Activated CD8-positive, alpha-beta T cell treated with anti-CD3 and anti-CD28 coated beads for 36 hours (primary cell): ENCODE measurements at regions of chr6 and their contacts with region 1.

Region 1: GRCh38 chr6:136643850-136644596 is 93.8 kb upstream of the MAP7 start:
- DNase-seq: peak; percentile 90
- ATAC-seq: peak; percentile 41
- H3K4me3 Mint-ChIP-seq: no peak overlapping the region
- H3K27ac Mint-ChIP-seq: no peak overlapping the region
- H3K4me1 Mint-ChIP-seq: no peaks in the 10 kb centered on the region
- H3K27me3 Mint-ChIP-seq: no peaks in the 10 kb centered on the region
- CTCF ChIP-seq: peak; percentile 95

Region 2: DNA sequence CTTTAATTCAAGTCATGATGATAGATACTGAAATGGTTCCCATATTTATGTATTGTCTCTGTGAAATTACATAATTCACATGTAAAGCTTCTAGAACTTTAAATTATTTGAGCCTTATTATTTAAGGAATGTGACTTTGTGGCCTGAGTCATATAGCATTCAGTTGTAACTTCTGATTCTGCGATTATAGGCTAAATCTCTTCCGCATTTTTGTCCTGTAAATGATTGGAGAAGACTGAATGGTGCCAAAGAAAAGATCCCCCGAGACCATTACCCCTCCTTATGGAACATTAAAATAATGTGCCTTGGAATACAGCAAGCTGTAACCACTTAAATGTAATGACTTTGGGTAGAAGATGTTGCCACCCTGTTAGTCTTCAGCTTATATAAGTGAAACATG is 30.5 kb before region 1 on chr6:
- CTCF ChIA-PET with region 1: interaction called, 19 read pairs
- POLR2A ChIA-PET with region 1: no interaction called
- intact Hi-C with region 1: no loop called
- DNase-seq: no peak
- ATAC-seq: no peak
- H3K4me3 Mint-ChIP-seq: no peak overlapping the region
- H3K27ac Mint-ChIP-seq: no peak overlapping the region
- H3K4me1 Mint-ChIP-seq: peaks cover 6% of the 10 kb centered on the region
- H3K27me3 Mint-ChIP-seq: no peaks in the 10 kb centered on the region
- CTCF ChIP-seq: no peak

Region 3: GRCh38 chr6:136666041-136666440 is 22.0 kb after region 1 on chr6:
- CTCF ChIA-PET with region 1: interaction called, 16 read pairs
- POLR2A ChIA-PET with region 1: no interaction called
- intact Hi-C with region 1: no loop called
- DNase-seq: no peak
- ATAC-seq: no peak
- H3K4me3 Mint-ChIP-seq: no peak overlapping the region
- H3K27ac Mint-ChIP-seq: no peak overlapping the region
- H3K4me1 Mint-ChIP-seq: no peaks in the 10 kb centered on the region
- H3K27me3 Mint-ChIP-seq: no peaks in the 10 kb centered on the region
- CTCF ChIP-seq: no peak

Region 4: GRCh38 chr6:136745300-136745699 is 101.3 kb after region 1 on chr6:
- CTCF ChIA-PET with region 1: interaction called, 18 read pairs
- POLR2A ChIA-PET with region 1: no interaction called
- intact Hi-C with region 1: no loop called
- DNase-seq: no peak
- ATAC-seq: no peak
- H3K4me3 Mint-ChIP-seq: no peak overlapping the region
- H3K27ac Mint-ChIP-seq: no peak overlapping the region
- H3K4me1 Mint-ChIP-seq: peaks cover 20% of the 10 kb centered on the region
- H3K27me3 Mint-ChIP-seq: no peaks in the 10 kb centered on the region
- CTCF ChIP-seq: no peak

Region 5: GRCh38 chr6:136783495-136784270 is 139.7 kb after region 1 on chr6:
- CTCF ChIA-PET with region 1: interaction called, 370 read pairs
- POLR2A ChIA-PET with region 1: interaction called, 3 read pairs
- intact Hi-C with region 1: no loop called
- DNase-seq: no peak
- ATAC-seq: peak; percentile 49
- H3K4me3 Mint-ChIP-seq: peak overlapping the region; percentile 34
- H3K27ac Mint-ChIP-seq: peak overlapping the region; percentile 78
- H3K4me1 Mint-ChIP-seq: peaks cover 71% of the 10 kb centered on the region
- H3K27me3 Mint-ChIP-seq: no peaks in the 10 kb centered on the region
- CTCF ChIP-seq: no peak

Region 6: DNA sequence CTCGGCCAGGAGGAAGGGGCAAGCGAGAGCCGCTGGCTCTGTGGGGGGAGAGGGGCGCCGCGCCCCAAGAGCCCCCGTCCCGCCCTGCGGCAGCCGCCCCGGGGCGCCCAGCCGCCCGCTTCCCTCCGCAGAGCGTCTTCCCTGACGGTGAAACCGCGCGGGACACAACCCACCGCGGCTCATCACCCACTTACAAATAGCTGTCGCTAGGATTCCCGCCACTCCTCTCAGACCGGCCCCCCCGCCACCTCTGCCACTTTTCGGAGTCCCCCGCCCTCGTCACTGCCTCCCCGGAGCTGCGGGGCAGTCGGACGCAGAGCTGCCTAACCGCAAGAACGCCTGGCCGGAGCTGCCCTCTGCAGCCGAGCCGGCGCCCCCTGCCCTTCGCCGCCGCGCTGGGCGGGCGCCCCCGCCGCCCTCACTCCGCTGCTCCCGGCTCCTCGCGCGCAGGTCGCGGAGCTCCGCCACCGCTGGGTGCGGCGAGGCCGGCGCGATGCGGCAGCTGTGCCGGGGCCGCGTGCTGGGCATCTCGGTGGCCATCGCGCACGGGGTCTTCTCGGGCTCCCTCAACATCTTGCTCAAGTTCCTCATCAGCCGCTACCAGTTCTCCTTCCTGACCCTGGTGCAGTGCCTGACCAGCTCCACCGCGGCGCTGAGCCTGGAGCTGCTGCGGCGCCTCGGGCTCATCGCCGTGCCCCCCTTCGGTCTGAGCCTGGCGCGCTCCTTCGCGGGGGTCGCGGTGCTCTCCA is 278.1 kb after region 1 on chr6 and contains the start of gene SLC35D3:
- CTCF ChIA-PET with region 1: interaction called, 18 read pairs
- POLR2A ChIA-PET with region 1: no interaction called
- intact Hi-C with region 1: no loop called
- DNase-seq: peak; percentile 18
- ATAC-seq: peak; percentile 34
- H3K4me3 Mint-ChIP-seq: peak within 1 kb of the TSS; percentile 72
- H3K27ac Mint-ChIP-seq: no peak within 1 kb of the TSS
- H3K4me1 Mint-ChIP-seq: peaks cover 21% of the 10 kb centered on the region
- H3K27me3 Mint-ChIP-seq: peaks cover 47% of the 10 kb centered on the region
- CTCF ChIP-seq: no peak
- total RNA-seq, gene SLC35D3: not detected

Region 7: DNA sequence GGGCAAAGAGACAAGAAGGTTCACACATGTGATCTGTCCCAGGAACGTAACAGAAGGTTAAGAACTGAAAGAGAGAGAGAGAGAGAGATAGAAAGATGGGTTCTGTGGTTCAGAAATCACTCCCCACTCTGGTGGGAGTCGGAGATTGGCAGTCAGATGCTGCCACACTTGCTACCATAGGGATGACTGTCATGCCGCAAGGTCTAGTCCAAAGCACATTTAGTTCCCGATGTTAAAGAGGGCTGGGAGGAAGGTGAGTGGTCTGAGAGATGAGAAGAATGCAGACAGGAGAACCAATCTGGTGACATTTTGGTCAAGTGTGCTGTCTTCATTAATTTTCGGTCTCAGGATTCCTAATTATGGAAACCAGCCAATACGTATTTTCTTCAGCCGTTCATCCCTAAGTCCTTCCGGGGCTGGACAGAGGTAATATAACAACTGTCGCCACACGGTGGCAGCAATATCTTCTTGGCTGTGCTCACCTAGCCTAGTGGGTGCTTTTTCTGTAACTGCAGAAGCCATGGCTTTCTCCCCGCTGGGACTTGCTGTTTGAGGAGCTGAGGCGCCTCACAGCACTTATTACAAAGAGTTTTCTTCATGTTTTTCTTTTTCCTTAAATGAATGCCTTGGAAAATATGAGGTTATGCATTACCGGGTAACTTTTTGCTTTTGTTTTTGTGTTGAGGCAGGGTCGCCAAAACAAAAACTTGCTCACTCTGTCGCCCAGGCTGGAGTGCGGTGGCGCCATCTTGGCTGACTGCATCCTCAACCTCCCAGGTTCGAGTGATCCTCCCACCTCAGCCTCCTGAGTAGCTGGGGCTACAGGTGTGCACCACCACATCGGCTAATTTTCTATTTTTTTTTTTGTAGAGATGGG is 324.1 kb after region 1 on chr6:
- CTCF ChIA-PET with region 1: no interaction called
- POLR2A ChIA-PET with region 1: no interaction called
- intact Hi-C with region 1: no loop called
- DNase-seq: peak; percentile 81
- ATAC-seq: peak; percentile 91
- H3K4me3 Mint-ChIP-seq: no peak overlapping the region
- H3K27ac Mint-ChIP-seq: no peak overlapping the region
- H3K4me1 Mint-ChIP-seq: peaks cover 3% of the 10 kb centered on the region
- H3K27me3 Mint-ChIP-seq: peaks cover 20% of the 10 kb centered on the region
- CTCF ChIP-seq: peak; percentile 67